ENCODE measurements at regions of chr19 and their contacts with region 1.

Region 1: DNA sequence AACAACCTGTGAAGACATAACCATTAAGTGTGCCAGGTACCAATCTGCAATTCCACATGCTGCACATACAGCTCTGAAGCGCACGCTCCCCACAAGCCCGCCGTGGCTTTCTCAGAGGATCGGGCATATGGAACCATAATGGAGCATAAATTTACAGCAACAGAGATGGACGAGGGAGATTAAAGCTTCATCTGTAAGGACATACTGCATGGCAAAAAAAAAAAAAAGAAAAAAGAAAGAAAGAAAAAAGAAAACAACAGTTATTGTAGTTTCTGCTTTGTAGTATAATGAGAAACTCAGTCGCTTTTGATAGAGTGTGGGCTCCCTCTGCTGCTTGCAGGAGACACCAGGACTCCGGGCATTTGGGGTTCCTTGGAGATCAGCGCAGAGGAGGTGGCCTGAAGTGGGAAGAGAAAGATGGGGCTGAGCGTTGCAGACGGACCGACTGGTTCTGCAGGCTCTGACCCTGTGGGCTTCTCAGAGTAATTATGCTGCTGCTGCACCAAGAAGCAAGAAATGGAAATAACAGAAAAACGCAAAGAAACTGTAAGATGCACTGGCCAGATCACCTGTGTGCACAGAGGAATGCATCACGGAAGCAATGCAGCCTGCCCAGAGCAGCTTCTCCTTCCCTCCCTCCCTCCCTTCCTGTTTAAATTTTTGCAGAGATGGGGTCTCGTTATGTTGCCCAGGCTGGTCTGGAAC is 10.8 kb upstream of the PDCD5 start:
- DNase-seq: no peak
- H3K4me3 Mint-ChIP-seq: no peak overlapping the region
- H3K27ac Mint-ChIP-seq: no peak overlapping the region
- H3K4me1 Mint-ChIP-seq: peaks cover 14% of the 10 kb centered on the region
- H3K27me3 Mint-ChIP-seq: peaks cover 6% of the 10 kb centered on the region

Region 2: DNA sequence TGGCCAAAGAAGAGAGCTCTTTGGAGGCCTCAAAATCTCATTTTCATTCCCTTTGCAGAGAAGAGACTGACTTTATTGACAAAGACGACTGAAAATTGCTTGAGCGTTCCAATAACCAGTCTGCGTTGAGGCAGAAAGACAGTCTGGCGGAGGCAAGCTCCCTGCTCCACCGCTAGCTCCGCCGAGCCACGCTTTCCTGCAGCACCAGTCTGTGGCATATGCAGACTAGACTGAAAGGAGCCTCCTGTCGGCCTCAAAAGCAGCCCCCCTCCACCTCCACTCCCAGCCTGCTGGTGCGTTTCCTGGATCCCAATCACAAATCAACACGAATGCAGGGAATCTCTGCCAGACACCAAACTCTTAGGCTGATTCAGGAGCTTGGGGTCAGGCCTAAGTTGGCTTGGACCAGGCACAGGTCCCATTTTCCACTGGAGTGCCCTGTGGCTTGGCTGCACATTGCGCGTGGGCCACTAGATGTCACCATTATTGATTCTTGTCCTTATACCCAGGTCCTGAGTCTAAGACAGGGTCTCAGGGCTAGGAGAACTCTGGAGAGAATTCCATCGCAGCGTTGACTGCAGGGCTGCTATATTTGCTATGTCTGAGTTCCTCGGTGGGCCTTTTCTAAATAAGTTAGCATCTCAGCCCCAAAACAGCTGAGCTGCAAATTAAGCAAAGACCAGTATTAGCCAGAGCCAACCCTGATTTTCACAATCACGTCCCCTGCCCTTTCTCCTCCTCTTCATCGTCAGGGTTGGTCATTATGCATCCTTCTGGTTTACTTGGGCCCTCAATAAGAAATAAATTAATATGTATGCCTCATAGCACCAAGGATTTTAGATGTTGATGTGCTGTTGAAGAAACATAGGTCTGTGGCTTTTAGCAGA is 230.0 kb before region 1 on chr19:
- intact Hi-C with region 1: loop called (anchors 1 kb)
- DNase-seq: no peak
- H3K4me3 Mint-ChIP-seq: no peak overlapping the region
- H3K27ac Mint-ChIP-seq: no peak overlapping the region
- H3K4me1 Mint-ChIP-seq: no peaks in the 10 kb centered on the region
- H3K27me3 Mint-ChIP-seq: peaks cover 9% of the 10 kb centered on the region

Region 3: GRCh38 chr19:32464279-32464678 is 106.0 kb before region 1 on chr19:
- intact Hi-C with region 1: loop called (anchors 1 kb)
- DNase-seq: no peak
- H3K4me3 Mint-ChIP-seq: no peak overlapping the region
- H3K27ac Mint-ChIP-seq: no peak overlapping the region
- H3K4me1 Mint-ChIP-seq: peaks cover 1% of the 10 kb centered on the region
- H3K27me3 Mint-ChIP-seq: no peaks in the 10 kb centered on the region

Region 4: GRCh38 chr19:32662186-32662585 is 92.0 kb after region 1 on chr19:
- intact Hi-C with region 1: no loop called
- DNase-seq: no peak
- H3K4me3 Mint-ChIP-seq: no peak overlapping the region
- H3K27ac Mint-ChIP-seq: no peak overlapping the region
- H3K4me1 Mint-ChIP-seq: no peaks in the 10 kb centered on the region
- H3K27me3 Mint-ChIP-seq: no peaks in the 10 kb centered on the region

Measured in activated T-helper 1 cell treated with anti-CD3 and anti-CD28 coated beads, Interleukin-12 subunit alpha, Interleukin-12 subunit beta, Interleukin-2, Interleukin-4 antibody, amounts not matched to agents 30 ng/mL and 10 ng/mL and 1 ng/mL, durations not matched to agents 14 hours and 24 hours and 36 hours (primary cell).